SK-N-SH (cell line): ENCODE measurements at regions of chr12 and their contacts with region 1.

Region 1: GRCh38 chr12:47742253-47742825 is 16.3 kb downstream of the RAPGEF3 start:
- DNase-seq: peak; percentile 72
- H3K4me3 ChIP-seq: no peak overlapping the region
- H3K27ac ChIP-seq: no peak overlapping the region
- H3K4me1 ChIP-seq: peaks cover 14 to 39% of the 10 kb centered on the region in 2 experiments; a peak in 3 of 4 replicates
- H3K27me3 ChIP-seq: no peaks in the 10 kb centered on the region
- CTCF ChIP-seq: peak; percentile 98
- EP300 ChIP-seq: no peak
- RAD21 ChIP-seq: peak; percentile 82

Region 2: DNA sequence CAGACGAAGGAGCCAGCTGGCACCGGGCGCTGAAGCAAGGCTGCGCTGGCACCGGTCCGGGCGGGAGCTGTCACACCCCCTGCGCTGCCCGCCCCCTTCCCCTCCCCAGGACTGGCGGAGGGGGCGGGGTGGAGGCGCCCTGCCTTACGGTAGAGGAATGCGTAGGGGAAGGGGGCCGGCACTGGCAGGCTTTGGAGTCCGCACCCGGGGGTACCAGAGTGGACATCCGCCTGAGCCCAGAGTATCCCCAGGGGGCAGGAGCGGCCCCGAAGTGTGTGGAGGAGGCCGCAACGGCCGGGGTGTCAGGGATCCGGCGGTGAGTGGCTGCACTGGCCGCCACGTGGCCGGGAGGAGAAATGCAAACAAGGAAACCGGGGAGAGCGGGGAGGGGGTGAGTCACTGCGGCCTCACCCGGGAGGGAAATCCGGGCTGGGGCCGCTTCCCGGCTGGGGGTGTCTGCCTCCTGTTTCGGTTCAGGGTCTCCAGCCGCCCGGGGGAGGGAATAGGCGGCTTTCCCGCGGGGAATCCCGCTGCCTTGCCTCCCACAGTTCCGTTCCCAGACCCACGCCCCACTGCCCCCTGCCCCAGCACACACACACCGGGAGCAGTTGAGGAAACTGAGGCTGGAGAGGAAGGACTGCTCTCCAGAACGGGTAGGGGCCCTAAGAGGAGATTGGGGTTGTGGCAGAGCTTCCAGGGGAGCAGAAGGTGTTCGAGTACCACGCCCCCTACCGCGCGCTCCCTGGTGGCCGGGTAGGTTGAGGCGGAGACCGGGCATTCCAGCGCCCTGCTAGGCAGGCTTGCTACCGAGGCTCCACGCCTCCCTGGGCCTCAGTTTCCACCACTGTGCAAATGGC is 16.7 kb after region 1 on chr12 and contains the start of gene RAPGEF3:
- CTCF ChIA-PET with region 1: interaction called, 435 read pairs
- POLR2A ChIA-PET with region 1: interaction called, 7 read pairs
- DNase-seq: peak; percentile 95
- H3K4me3 ChIP-seq: peak within 1 kb of the TSS; percentile 55 to 69
- H3K27ac ChIP-seq: peak within 1 kb of the TSS in 1 of 2 experiments; percentile 42; a peak in 2 of 4 replicates
- H3K4me1 ChIP-seq: peaks cover 0 to 57% of the 10 kb centered on the region in 2 experiments; a peak in 2 of 4 replicates
- H3K27me3 ChIP-seq: no peaks in the 10 kb centered on the region
- CTCF ChIP-seq: peak; percentile 58
- EP300 ChIP-seq: peak in 1 of 2 experiments; percentile 45; a peak in 1 of 4 replicates
- RAD21 ChIP-seq: peak; percentile 53
- polyA plus RNA-seq, gene RAPGEF3: 0.90 and 0.93 TPM in 2 replicates

Region 3: GRCh38 chr12:47812797-47813510 is 70.6 kb after region 1 on chr12:
- CTCF ChIA-PET with region 1: interaction called, 19 read pairs
- POLR2A ChIA-PET with region 1: no interaction called
- DNase-seq: no peak
- H3K4me3 ChIP-seq: peak overlapping the region in 1 of 2 experiments; percentile 36; a peak in 1 of 4 replicates
- H3K27ac ChIP-seq: peak overlapping the region; percentile 48 to 84
- H3K4me1 ChIP-seq: peaks cover 67 to 76% of the 10 kb centered on the region in 2 experiments
- H3K27me3 ChIP-seq: no peaks in the 10 kb centered on the region
- CTCF ChIP-seq: no peak
- EP300 ChIP-seq: 0 out of 4 replicates have a peak, but pooled peaks of 1 of the 2 experiments have one; percentile 36
- RAD21 ChIP-seq: no peak

Region 4: GRCh38 chr12:47828608-47829536 is 86.5 kb after region 1 on chr12:
- CTCF ChIA-PET with region 1: interaction called, 41 read pairs
- POLR2A ChIA-PET with region 1: no interaction called
- DNase-seq: peak; percentile 83
- H3K4me3 ChIP-seq: no peak overlapping the region
- H3K27ac ChIP-seq: peak overlapping the region in 1 of 2 experiments; percentile 81; a peak in 2 of 4 replicates
- H3K4me1 ChIP-seq: peaks cover 14% of the 10 kb centered on the region in 2 experiments; a peak in 2 of 4 replicates
- H3K27me3 ChIP-seq: no peaks in the 10 kb centered on the region
- CTCF ChIP-seq: no peak
- EP300 ChIP-seq: no peak
- RAD21 ChIP-seq: no peak